SK-N-SH (cell line): ENCODE measurements at regions of chr20 and their contacts with region 1.

Region 1: DNA sequence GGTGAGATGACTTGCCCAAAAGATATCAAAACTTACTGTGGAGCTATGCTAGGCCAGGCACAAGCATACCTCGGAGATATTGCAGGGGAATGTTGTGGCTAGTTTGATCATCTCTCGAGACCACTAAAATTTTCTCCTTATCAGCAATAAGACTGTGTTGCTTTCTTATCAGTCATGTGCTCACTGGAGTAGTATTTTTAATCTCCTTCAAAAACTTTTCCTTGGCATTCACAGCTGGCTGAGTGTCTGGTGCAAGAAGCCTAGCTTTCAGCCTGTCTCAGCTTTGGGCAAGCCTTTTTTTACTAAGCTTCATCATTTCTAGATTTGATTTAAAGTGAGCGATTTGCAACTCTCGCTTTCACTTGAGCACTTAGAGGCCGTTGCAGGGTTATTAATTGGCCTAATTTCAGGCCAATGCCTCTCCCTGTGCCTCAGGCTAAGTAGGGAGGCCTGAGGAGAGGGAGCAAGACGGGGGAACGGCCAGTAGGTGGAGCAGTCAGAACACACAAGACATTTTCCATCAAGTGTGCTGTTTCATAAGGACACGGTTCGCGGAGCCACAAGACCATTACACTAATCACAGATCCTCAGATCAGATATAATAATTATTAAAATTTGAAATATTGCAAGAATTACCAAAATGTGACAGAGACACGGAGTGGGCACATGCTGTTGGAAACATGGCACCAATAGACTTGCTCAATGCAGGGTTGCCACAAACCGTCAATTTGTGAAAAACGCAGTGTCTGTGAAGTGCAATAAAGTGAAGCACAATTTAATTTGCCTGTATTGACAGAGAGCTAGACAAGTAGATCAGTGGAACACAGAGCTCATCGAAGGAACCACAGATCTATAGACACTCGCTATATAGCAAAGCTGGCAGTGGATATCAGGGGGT is 106.8 kb upstream of the SIRPG start:
- DNase-seq: peak; percentile 65
- H3K4me3 ChIP-seq: no peak overlapping the region; a peak in 1 of 4 replicates
- H3K27ac ChIP-seq: no peak overlapping the region
- H3K4me1 ChIP-seq: peaks cover 6 to 13% of the 10 kb centered on the region in 2 experiments; a peak in 3 of 4 replicates
- H3K27me3 ChIP-seq: no peaks in the 10 kb centered on the region
- CTCF ChIP-seq: peak; percentile 86
- EP300 ChIP-seq: no peak
- RAD21 ChIP-seq: peak; percentile 82

Region 2: DNA sequence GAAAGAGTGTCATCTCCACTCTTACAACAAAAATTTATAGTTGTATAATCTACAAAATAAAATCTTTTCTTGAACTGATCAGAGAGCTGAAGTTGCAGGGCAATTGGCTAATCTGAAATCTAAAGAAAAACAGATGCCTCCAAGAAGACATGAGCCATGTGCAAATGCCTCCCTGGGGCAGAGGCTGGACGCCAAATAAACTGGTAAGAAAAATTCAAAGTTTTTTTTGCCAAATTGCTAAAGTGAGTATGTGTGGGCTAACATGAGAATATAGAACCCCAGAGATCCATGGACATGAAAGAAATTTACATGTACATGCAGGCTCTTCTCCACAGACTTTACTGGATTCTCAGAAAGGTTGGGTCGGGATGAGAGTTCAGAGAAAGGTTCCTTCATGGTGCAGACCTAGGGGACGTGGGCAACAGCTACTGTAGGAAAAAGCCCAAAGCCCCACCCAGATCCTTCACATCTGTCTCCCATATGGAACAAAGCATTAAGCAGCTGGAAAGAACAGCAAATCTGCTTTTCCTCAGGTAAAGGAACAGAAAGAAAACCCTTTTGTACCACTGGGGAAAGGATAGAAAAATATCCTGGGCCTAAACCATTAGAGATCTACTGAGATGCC is 16.3 kb before region 1 on chr20:
- CTCF ChIA-PET with region 1: interaction called, 18 read pairs
- POLR2A ChIA-PET with region 1: no interaction called
- DNase-seq: no peak
- H3K4me3 ChIP-seq: no peak overlapping the region
- H3K27ac ChIP-seq: no peak overlapping the region
- H3K4me1 ChIP-seq: peaks cover 0 to 8% of the 10 kb centered on the region in 2 experiments; a peak in 1 of 4 replicates
- H3K27me3 ChIP-seq: no peaks in the 10 kb centered on the region; the same call in 1 of the 2 replicates
- CTCF ChIP-seq: no peak
- EP300 ChIP-seq: no peak; a peak in 1 of 4 replicates
- RAD21 ChIP-seq: no peak

Region 3: GRCh38 chr20:1784586-1784985 is 20.2 kb after region 1 on chr20:
- CTCF ChIA-PET with region 1: interaction called, 10 read pairs
- POLR2A ChIA-PET with region 1: no interaction called
- DNase-seq: no peak
- H3K4me3 ChIP-seq: no peak overlapping the region
- H3K27ac ChIP-seq: no peak overlapping the region
- H3K4me1 ChIP-seq: no peaks in the 10 kb centered on the region
- H3K27me3 ChIP-seq: peaks cover 29% of the 10 kb centered on the region; the same call in 1 of the 2 replicates
- CTCF ChIP-seq: no peak
- EP300 ChIP-seq: no peak
- RAD21 ChIP-seq: no peak

Region 4: DNA sequence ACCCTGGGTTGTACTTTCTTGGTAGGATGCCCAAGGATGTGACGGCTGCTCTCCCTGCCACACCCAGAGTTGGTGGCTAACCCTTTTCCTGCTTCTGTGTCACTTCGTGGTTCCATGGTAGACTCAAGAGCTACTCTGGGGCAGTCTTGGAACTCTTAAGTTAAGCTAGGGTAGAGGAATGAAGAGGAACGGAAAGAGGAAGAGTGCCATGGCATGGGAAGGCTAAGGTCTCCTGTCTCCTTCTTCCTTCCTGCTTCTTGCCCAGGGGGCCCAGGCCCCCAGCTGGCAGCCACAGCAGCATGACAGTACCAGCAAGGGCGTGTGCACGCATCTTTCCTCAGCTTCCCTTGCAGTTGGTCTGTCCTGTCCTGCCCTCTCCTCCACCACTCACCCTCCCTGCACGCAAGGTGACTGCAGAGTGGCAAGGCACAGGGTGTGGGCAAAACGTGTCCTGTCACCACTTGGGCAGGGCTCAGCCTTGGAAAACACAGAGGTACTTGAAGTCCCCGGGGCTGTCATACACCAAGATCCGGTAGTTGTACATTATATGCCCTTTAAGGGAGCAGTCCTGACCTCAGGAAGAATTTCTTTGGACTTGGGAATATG is 491.6 kb after region 1 on chr20:
- CTCF ChIA-PET with region 1: no interaction called
- POLR2A ChIA-PET with region 1: no interaction called
- DNase-seq: no peak
- H3K4me3 ChIP-seq: no peak overlapping the region
- H3K27ac ChIP-seq: no peak overlapping the region
- H3K4me1 ChIP-seq: no peaks in the 10 kb centered on the region
- H3K27me3 ChIP-seq: no peaks in the 10 kb centered on the region; the same call in 1 of the 2 replicates
- CTCF ChIP-seq: no peak
- EP300 ChIP-seq: no peak
- RAD21 ChIP-seq: no peak